ENCODE measurements at regions of chr4 and their contacts with region 1.

Region 1: GRCh38 chr4:88456757-88457306 is at the start of gene HERC5:
- DNase-seq: peak; percentile 94
- H3K4me3 Mint-ChIP-seq: peak within 1 kb of the TSS; percentile 100
- H3K27ac Mint-ChIP-seq: peak within 1 kb of the TSS; percentile 100
- H3K4me1 Mint-ChIP-seq: peaks cover 53% of the 10 kb centered on the region
- H3K27me3 Mint-ChIP-seq: no peaks in the 10 kb centered on the region
- total RNA-seq, gene HERC5: 92.5 to 97.0 TPM

Region 2: DNA sequence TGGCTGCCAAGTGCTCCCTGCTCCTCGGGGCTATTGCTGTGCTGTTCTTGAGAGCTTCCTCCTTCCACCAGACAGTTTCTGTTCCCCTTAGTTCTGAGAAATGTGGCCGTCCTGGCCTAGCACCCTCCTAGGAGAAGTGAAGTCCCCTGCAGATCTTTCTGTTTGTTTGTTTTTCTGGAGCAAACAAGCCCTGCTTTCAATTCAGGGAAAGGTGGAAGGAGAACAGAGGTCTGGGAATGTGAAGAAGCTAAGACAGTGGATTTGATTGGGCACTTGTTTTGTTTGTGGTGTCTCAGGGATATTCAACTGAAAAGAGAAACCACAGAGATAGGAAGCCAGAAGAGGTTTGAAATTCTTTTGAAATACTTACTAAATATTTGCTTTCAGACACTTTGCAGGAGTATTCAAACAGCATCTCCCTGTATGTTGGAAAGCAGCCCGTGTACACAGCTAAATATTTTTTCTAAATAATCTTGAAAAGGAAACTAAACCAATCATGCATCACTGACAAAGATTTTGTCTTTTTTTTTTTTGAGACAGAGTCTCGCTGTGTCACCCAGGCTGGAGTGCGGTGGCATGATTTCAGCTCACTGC is 136.0 kb before region 1 on chr4:
- CTCF ChIA-PET with region 1: interaction called, 3 read pairs
- POLR2A ChIA-PET with region 1: interaction called, 12 read pairs
- DNase-seq: peak; percentile 54
- H3K4me3 Mint-ChIP-seq: peak overlapping the region; percentile 75
- H3K27ac Mint-ChIP-seq: peak overlapping the region; percentile 96
- H3K4me1 Mint-ChIP-seq: peaks cover 30% of the 10 kb centered on the region
- H3K27me3 Mint-ChIP-seq: no peaks in the 10 kb centered on the region

Region 3: GRCh38 chr4:88378691-88379559 is 77.9 kb before region 1 on chr4 and contains the start of gene HERC6:
- CTCF ChIA-PET with region 1: interaction called, 15 read pairs
- POLR2A ChIA-PET with region 1: interaction called, 43 read pairs
- DNase-seq: peak; percentile 93
- H3K4me3 Mint-ChIP-seq: peak within 1 kb of the TSS; percentile 79
- H3K27ac Mint-ChIP-seq: peak within 1 kb of the TSS; percentile 92
- H3K4me1 Mint-ChIP-seq: peaks cover 61% of the 10 kb centered on the region
- H3K27me3 Mint-ChIP-seq: no peaks in the 10 kb centered on the region
- total RNA-seq, gene HERC6: 47.5 to 49.0 TPM

Region 4: GRCh38 chr4:88467392-88467791 is 10.6 kb after region 1 on chr4:
- CTCF ChIA-PET with region 1: interaction called, 3 read pairs
- POLR2A ChIA-PET with region 1: interaction called, 16 read pairs
- DNase-seq: no peak
- H3K4me3 Mint-ChIP-seq: no peak overlapping the region
- H3K27ac Mint-ChIP-seq: no peak overlapping the region
- H3K4me1 Mint-ChIP-seq: peaks cover 19% of the 10 kb centered on the region
- H3K27me3 Mint-ChIP-seq: no peaks in the 10 kb centered on the region

Measured in activated CD4-positive, alpha-beta memory T cell treated with anti-CD3 and anti-CD28 coated beads, Interleukin-2, amount 10 ng/mL, durations not matched to agents 7 days and 5 days (primary cell).